ENCODE measurements at regions of chr4 and their contacts with region 1.

Region 1: GRCh38 chr4:27318743-27319142 is 458.1 kb downstream of the STIM2 start:
- DNase-seq: peak; percentile 22 to 57 (median 50)
- H3K4me3 ChIP-seq: no peak overlapping the region
- H3K27ac ChIP-seq: no peak overlapping the region
- H3K4me1 ChIP-seq: no peaks in the 10 kb centered on the region
- H3K27me3 ChIP-seq: peaks cover 0 to 4% (median 0%) of the 10 kb centered on the region in 5 experiments

Region 2: DNA sequence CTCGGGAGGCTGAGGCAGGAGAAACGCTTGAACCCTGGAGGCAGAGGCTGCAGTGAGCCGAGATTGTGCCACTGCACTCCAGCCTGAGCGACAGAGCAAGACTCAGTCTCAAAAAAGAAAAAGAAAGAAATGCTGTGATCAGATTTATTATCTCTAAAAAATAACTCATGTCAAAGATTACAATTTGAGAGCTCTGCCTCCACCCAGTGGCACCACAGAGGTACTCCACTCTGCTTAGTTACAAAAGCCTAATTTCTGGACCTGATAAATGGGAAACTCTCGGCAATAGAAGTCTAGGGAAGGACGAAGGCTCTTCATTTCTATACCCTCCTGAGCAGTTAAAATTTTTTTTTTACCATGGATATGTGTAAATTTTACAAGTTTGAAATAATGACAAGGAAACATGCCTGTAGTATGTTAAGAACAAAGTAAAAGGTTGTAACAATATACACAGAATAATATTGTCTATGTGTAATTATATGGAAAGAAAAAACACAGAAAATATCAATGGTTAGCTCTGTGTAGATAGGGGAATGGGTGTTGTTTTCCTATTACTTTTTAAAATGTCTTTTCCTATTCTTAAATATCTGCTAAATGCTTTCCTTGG is 308.3 kb before region 1 on chr4:
- CTCF ChIA-PET with region 1: no interaction called
- POLR2A ChIA-PET with region 1: no interaction called
- DNase-seq: peak; percentile 63 to 81 (median 73)
- H3K4me3 ChIP-seq: no peak overlapping the region
- H3K27ac ChIP-seq: no peak overlapping the region
- H3K4me1 ChIP-seq: no peaks in the 10 kb centered on the region
- H3K27me3 ChIP-seq: no peaks in the 10 kb centered on the region

Region 3: DNA sequence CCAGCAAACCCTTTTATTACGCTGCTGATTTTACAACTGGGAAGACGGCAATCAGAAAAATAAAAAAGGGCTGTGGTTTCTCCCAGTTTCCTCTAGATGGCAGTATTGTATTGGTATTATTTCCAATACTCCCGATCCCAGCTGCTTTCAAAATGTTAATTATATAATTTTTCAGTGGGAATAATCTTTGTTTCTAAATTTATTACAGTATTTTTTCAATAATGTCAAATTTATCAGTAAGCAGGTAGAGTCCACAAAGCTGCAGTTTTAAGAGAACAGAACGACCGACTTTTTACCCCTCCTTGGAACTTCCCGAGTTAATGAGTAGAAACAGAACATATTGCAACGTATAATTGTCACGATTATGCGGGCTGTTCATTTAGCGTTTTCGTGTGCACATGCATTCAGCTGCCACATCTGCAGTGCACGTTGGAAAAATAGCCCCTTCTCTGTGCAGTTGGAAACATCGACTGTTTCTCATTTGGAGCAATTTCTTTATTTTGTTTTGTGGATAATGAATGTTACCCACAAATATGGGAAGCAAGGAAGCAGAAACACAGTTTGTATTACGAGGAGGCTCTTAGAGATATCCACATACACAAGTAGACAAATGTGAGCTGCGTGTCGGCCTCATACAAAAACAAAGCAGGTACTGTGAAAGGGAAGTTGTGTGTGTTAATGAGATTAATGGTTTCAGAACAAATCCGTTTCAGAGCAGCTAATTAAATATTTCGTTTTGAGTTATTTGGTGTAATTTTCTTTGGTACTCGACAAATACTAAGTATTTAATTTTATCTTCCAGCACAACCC is 270.1 kb before region 1 on chr4:
- CTCF ChIA-PET with region 1: interaction called, 54 read pairs
- POLR2A ChIA-PET with region 1: no interaction called
- DNase-seq: peak; percentile 19 to 47 (median 36)
- H3K4me3 ChIP-seq: peak overlapping the region in 5 of 7 experiments; percentile 8 to 64 (median 59)
- H3K27ac ChIP-seq: no peak overlapping the region
- H3K4me1 ChIP-seq: peaks cover 0 to 5% (median 2%) of the 10 kb centered on the region in 4 experiments
- H3K27me3 ChIP-seq: peaks cover 0 to 44% (median 16%) of the 10 kb centered on the region in 5 experiments

Region 4: DNA sequence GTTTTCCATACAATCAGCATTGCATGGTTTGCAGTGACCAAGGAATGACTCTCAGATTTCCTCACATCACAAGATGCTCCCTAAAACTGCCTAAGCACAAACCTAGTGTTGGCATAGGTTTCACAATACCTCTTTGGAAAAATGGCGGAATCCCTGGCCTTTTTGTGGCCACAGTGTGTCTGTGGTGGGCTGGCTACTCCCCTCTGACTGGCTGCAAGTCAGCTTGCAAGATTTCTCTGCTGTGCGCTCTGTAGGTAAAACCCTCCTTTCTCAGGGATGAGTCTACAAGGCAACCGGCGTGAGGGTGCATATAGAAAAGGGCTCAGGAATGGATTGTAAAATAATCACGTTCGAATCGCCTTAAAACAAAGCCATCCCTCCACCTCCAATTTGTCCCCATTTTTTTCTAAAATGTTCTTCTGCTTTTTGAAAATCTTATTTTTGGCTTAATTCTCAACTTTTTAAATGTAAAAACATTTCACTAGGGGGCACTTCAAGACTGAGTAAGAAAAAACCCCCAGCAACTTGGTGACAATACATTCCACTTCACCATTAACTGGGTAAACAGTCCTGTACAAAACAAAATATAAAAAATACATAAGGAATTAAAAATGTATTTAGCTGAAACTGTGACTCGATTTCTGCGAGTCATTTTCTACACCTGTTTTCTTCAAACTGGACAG is 222.5 kb before region 1 on chr4:
- CTCF ChIA-PET with region 1: interaction called, 36 read pairs
- POLR2A ChIA-PET with region 1: no interaction called
- DNase-seq: peak; percentile 5 to 43 (median 26)
- H3K4me3 ChIP-seq: no peak overlapping the region
- H3K27ac ChIP-seq: no peak overlapping the region
- H3K4me1 ChIP-seq: no peaks in the 10 kb centered on the region
- H3K27me3 ChIP-seq: peaks cover 0 to 2% (median 0%) of the 10 kb centered on the region in 5 experiments

Region 5: DNA sequence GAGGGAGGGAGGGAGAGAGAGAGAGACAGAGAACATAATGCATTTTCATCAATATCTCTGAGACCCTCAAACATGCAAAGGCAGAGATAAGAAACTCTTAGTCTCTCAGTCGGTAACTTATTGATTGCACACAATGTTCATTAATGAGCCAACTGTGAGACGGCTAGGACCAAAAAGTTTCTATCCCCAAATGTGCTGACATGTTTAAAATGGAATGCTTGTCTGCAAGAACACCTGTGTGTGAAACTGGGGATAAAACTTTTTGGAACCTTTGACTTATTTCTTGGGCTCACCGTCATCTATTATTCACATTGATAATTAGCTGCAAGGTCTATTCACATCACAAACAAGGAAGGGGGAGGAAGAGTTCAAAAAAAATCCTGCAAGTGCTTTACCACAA is 19.8 kb after region 1 on chr4:
- CTCF ChIA-PET with region 1: no interaction called
- POLR2A ChIA-PET with region 1: no interaction called
- DNase-seq: no peak
- H3K4me3 ChIP-seq: no peak overlapping the region
- H3K27ac ChIP-seq: no peak overlapping the region
- H3K4me1 ChIP-seq: no peaks in the 10 kb centered on the region
- H3K27me3 ChIP-seq: no peaks in the 10 kb centered on the region

Measured in common myeloid progenitor, CD34-positive (primary cell).